ENCODE measurements at regions of chr10 and their contacts with region 1.

Region 1: GRCh38 chr10:32239770-32240169 is 107.2 kb downstream of the EPC1 start:
- DNase-seq: no peak
- ATAC-seq: no peak
- H3K4me3 Mint-ChIP-seq: no peak overlapping the region
- H3K27ac Mint-ChIP-seq: no peak overlapping the region
- H3K4me1 Mint-ChIP-seq: peaks cover 13% of the 10 kb centered on the region
- H3K27me3 Mint-ChIP-seq: no peaks in the 10 kb centered on the region

Region 2: GRCh38 chr10:31603235-31604087 is 636.3 kb before region 1 on chr10:
- CTCF ChIA-PET with region 1: no interaction called
- POLR2A ChIA-PET with region 1: no interaction called
- intact Hi-C with region 1: no loop called
- DNase-seq: peak; percentile 94
- ATAC-seq: peak; percentile 92
- H3K4me3 Mint-ChIP-seq: peak overlapping the region; percentile 76
- H3K27ac Mint-ChIP-seq: peak overlapping the region; percentile 17
- H3K4me1 Mint-ChIP-seq: peaks cover 33% of the 10 kb centered on the region
- H3K27me3 Mint-ChIP-seq: peaks cover 2% of the 10 kb centered on the region

Region 3: GRCh38 chr10:32149252-32149955 is 90.4 kb before region 1 on chr10:
- CTCF ChIA-PET with region 1: interaction called, 4 read pairs
- POLR2A ChIA-PET with region 1: no interaction called
- intact Hi-C with region 1: loop called in 1 of 2 experiments (anchors 1 kb)
- DNase-seq: peak; percentile 62
- ATAC-seq: peak; percentile 87
- H3K4me3 Mint-ChIP-seq: no peak overlapping the region
- H3K27ac Mint-ChIP-seq: peak overlapping the region; percentile 75
- H3K4me1 Mint-ChIP-seq: peaks cover 32% of the 10 kb centered on the region
- H3K27me3 Mint-ChIP-seq: no peaks in the 10 kb centered on the region

Region 4: DNA sequence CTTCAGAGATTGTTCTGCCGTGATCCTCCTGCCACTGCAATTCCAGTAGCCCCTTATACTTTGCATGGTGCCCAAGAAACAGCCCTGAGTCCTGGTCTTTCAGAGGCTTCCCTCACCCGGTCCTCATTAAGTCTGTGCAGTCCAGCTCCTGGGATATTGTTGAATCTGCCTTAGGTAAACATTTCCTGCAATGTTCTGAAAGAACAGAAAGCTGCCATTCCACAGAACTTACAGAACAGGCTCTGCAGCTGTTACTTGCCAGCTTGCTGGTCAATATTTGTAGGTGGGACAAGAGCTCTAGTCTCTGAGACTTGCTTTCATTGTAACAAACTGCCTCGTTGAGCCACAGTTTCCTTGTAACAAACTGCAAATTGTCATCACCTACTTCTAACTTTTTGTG is 68.6 kb before region 1 on chr10:
- CTCF ChIA-PET with region 1: no interaction called
- POLR2A ChIA-PET with region 1: no interaction called
- intact Hi-C with region 1: no loop called
- DNase-seq: no peak
- ATAC-seq: no peak
- H3K4me3 Mint-ChIP-seq: no peak overlapping the region
- H3K27ac Mint-ChIP-seq: no peak overlapping the region
- H3K4me1 Mint-ChIP-seq: no peaks in the 10 kb centered on the region
- H3K27me3 Mint-ChIP-seq: peaks cover 3% of the 10 kb centered on the region

Region 5: DNA sequence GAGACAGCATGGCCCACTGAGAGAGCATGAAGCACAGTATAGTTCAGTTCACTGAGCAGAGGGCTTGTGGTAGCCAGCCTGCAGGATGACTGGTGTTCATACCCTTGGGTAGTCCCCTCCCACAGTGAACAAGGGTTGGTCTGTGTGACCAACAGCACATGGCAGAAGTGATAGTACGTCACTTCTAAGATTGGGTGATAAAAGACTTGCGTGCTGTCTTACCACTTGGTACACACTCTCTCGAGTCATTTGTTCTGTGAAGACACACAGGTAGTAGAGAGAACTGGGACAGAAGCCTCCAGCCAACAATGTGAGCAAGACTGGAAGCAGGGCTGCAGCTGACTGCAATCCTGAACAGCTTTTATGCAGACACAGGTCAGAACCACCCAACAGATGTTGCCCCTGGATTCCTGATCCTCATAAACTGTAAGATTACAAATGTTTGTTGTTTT is 92.6 kb after region 1 on chr10:
- CTCF ChIA-PET with region 1: interaction called, 6 read pairs
- POLR2A ChIA-PET with region 1: no interaction called
- intact Hi-C with region 1: loop called (anchors 1 kb)
- DNase-seq: peak; percentile 87
- ATAC-seq: peak; percentile 95
- H3K4me3 Mint-ChIP-seq: peak overlapping the region; percentile 75
- H3K27ac Mint-ChIP-seq: peak overlapping the region; percentile 98
- H3K4me1 Mint-ChIP-seq: peaks cover 96% of the 10 kb centered on the region
- H3K27me3 Mint-ChIP-seq: no peaks in the 10 kb centered on the region

Region 6: DNA sequence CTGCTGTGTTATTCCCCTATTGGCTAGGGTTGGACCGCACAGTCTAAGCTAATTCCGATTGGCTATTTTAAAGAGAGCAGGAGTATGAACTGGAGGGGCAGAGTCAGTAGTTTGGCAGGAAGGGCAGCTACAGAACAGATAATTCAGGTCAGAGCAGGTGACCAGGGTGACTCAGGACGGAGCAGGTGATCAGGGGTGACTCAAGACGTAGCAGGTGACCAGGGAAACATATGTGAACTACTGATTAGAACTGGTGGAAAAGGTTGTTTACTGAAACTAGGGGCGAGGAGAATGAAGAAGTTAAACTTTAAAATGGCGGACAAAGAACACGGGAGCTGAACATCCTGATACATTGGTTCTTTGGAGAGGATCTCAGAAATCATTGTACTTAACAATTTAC is 308.4 kb after region 1 on chr10:
- CTCF ChIA-PET with region 1: no interaction called
- POLR2A ChIA-PET with region 1: no interaction called
- intact Hi-C with region 1: no loop called
- DNase-seq: no peak
- ATAC-seq: no peak
- H3K4me3 Mint-ChIP-seq: no peak overlapping the region
- H3K27ac Mint-ChIP-seq: no peak overlapping the region
- H3K4me1 Mint-ChIP-seq: no peaks in the 10 kb centered on the region
- H3K27me3 Mint-ChIP-seq: no peaks in the 10 kb centered on the region

Region 7: GRCh38 chr10:32958085-32959005 is 718.6 kb after region 1 on chr10 and contains the start of gene ITGB1:
- CTCF ChIA-PET with region 1: no interaction called
- POLR2A ChIA-PET with region 1: no interaction called
- intact Hi-C with region 1: loop called in 1 of 2 experiments (anchors 1 kb)
- DNase-seq: peak; percentile 92
- ATAC-seq: peak; percentile 83
- H3K4me3 Mint-ChIP-seq: peak within 1 kb of the TSS; percentile 83
- H3K27ac Mint-ChIP-seq: peak within 1 kb of the TSS; percentile 96
- H3K4me1 Mint-ChIP-seq: peaks cover 43% of the 10 kb centered on the region
- H3K27me3 Mint-ChIP-seq: peaks cover 10% of the 10 kb centered on the region
- total RNA-seq, gene ITGB1: 57.6 to 68.9 TPM

Region 8: GRCh38 chr10:33143160-33143728 is 903.5 kb after region 1 on chr10:
- CTCF ChIA-PET with region 1: no interaction called
- POLR2A ChIA-PET with region 1: no interaction called
- intact Hi-C with region 1: loop called (anchors 2 to 5 kb)
- DNase-seq: peak; percentile 76
- ATAC-seq: peak; percentile 86
- H3K4me3 Mint-ChIP-seq: no peak overlapping the region
- H3K27ac Mint-ChIP-seq: peak overlapping the region; percentile 75
- H3K4me1 Mint-ChIP-seq: peaks cover 56% of the 10 kb centered on the region
- H3K27me3 Mint-ChIP-seq: peaks cover 2% of the 10 kb centered on the region